ENCODE measurements at regions of chr7 and their contacts with region 1.

Region 1: DNA sequence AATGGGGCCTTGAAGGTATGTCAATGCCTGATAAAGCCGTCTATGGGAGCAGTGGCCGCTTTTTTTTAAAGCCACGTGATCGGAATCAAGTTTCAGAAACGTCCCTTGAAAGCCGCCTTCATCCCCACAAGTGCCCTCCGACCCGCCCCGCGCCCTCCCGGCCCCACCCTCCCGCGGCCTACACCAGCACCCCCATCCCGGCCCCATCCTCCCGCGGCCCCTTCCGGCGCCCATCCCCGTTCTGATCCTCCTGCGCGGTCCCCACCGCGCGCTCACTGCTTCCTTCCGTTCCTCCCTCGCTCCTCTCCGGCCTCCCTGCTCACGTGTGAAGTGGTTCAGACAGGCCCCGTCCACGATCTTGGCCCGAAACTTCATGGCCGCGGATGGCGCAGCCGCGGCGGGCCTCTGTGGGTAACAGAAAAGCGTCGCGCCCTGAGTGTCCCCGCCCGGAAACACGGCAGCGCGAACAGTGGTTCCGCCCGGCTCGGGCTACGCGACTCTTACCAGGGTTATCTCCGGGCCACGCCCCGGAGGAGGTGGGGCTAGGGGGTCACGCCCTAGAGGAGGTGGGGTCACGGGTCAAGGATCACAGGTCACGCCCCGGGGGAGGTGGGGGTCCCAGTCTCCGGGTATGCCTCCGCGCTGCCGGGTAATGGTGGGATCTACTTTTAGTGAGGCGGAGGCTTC is at the start of gene HUS1:
- DNase-seq: peak; percentile 81
- ATAC-seq: peak; percentile 100
- H3K4me3 ChIP-seq: peak within 1 kb of the TSS; percentile 84
- H3K27ac ChIP-seq: peak within 1 kb of the TSS; percentile 95
- H3K4me1 ChIP-seq: peaks cover 3% of the 10 kb centered on the region
- H3K27me3 ChIP-seq: peaks cover 2% of the 10 kb centered on the region; the same call in 1 of the 2 replicates
- CTCF ChIP-seq: no peak
- POLR2A ChIP-seq: peak; percentile 90
- RAD21 ChIP-seq: no peak
- total RNA-seq, gene HUS1: 18.3 and 31.9 TPM in 2 replicates

Region 2: GRCh38 chr7:47833211-47833610 is 146.1 kb before region 1 on chr7:
- CTCF ChIA-PET with region 1: no interaction called
- POLR2A ChIA-PET with region 1: interaction called, 12 read pairs
- dilution Hi-C with region 1: no loop called
- in situ Hi-C with region 1: no loop called
- intact Hi-C with region 1: no loop called
- DNase-seq: no peak
- ATAC-seq: no peak
- H3K4me3 ChIP-seq: no peak overlapping the region
- H3K27ac ChIP-seq: no peak overlapping the region
- H3K4me1 ChIP-seq: no peaks in the 10 kb centered on the region
- H3K27me3 ChIP-seq: peaks cover 26% of the 10 kb centered on the region
- CTCF ChIP-seq: no peak
- POLR2A ChIP-seq: no peak
- RAD21 ChIP-seq: no peak

Measured in IMR-90 (cell line).